ENCODE measurements at regions of chr5 and their contacts with region 1.

Region 1: DNA sequence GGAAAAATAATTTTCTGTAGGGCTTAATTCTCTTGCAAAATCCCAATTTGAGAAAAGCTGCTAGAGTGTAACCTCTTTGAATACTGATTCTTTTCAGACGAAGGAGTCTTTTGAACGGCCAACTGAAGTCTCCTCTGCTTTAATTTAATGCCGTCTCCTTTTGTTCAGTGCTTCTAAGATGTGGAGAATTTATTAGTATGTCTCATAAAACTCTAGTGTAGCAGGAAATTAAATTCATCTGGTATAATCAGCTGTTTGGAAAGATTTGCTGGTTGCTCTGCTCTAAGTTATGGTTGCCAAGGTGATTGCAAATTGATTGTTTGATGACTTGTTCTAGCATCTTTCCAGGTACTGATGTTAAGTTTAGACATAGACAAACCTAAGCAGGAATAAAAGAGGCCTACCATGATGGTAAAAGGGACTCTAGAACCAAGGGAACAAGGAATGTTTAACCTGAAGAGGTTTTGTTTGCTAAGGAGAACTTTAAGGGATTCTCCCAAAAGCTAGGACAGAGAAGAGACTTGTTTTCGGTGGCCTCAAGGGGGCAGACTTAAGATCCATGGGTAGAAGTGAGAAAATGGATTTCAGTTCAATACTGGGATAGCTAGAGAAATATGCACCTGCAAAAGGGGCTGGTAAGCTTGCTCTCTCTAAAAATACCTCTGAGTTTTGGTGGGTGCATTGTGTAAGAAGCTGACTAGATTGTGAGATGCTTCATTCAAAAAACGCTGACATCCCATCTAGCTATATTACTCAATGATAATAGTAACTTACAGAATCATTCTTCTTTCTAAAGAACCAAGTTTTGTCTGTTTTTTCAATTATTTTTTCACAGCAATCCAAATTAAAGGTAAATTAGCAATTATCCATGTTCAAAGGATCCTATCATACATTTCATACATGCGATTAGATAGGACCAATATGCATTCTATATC is 5.7 kb upstream of the ADRB2 start:
- DNase-seq: peak; percentile 31
- ATAC-seq: peak; percentile 83
- H3K4me3 ChIP-seq: no peak overlapping the region
- H3K27ac ChIP-seq: no peak overlapping the region
- H3K4me1 ChIP-seq: peaks cover 5 to 6% of the 10 kb centered on the region in 2 experiments; a peak in 2 of 4 replicates
- H3K27me3 ChIP-seq: no peaks in the 10 kb centered on the region
- CTCF ChIP-seq: peak; percentile 60 to 78 (median 78); a peak in 5 of 6 replicates
- POLR2A ChIP-seq: no peak
- RAD21 ChIP-seq: peak; percentile 49

Region 2: GRCh38 chr5:148780711-148781110 is 40.0 kb before region 1 on chr5:
- CTCF ChIA-PET with region 1: no interaction called
- POLR2A ChIA-PET with region 1: no interaction called
- RAD21 ChIA-PET with region 1: no interaction called
- intact Hi-C with region 1: no loop called
- DNase-seq: no peak
- ATAC-seq: no peak
- H3K4me3 ChIP-seq: no peak overlapping the region
- H3K27ac ChIP-seq: no peak overlapping the region
- H3K4me1 ChIP-seq: peaks cover 5 to 21% of the 10 kb centered on the region in 2 experiments; a peak in 2 of 4 replicates
- H3K27me3 ChIP-seq: no peaks in the 10 kb centered on the region
- CTCF ChIP-seq: 0 out of 6 replicates have a peak, but pooled peaks of 1 of the 3 experiments have one; percentile 15
- POLR2A ChIP-seq: no peak
- RAD21 ChIP-seq: no peak

Region 3: DNA sequence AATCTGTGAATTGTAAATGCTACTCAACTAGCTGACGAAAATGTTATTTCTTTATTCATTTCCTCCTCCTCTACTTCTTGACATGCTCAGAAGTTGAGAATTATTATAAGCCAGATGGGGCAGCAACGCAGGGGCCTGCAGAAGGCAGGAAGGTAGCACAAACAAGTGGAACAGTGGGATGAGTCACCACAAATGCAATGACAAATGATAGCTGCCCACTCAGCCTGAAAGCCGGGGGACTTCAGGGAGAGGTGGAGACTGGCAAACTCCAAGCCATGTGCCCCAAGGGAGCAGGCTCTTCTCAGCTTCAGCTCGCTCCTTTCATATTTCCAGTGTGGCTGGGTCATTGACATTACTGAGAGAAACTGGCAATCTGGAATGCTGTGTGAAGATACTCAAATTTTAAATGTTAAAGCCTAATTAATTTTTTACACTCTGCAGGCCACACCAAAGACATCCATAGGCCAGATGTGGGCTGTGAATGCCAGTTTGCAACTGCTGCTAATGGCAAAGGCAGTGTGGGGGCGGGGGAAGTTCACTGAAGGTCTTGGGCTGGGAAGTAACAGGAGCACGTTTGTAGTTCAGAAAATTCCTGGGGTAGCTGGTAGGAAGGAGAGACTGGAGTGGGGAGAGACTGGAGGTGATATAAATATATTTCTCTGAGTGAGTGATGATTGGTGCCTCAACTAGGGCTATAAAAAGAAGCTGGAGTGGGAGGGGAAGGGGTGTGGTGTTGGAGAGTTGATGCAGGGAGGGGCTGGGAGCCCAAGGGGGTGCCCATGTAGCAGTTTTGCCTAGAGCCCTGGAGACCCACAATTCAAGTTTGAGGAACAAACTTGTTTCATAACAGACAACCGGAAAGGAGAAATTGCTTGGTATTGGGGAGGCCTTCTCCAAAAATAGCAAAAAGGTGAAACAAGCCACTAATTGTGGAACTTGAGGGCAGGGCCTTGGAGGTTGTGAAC is 15.1 kb before region 1 on chr5:
- CTCF ChIA-PET with region 1: interaction called, 18 read pairs
- POLR2A ChIA-PET with region 1: no interaction called
- RAD21 ChIA-PET with region 1: no interaction called
- intact Hi-C with region 1: no loop called
- DNase-seq: no peak
- ATAC-seq: peak; percentile 63
- H3K4me3 ChIP-seq: no peak overlapping the region
- H3K27ac ChIP-seq: no peak overlapping the region
- H3K4me1 ChIP-seq: peaks cover 3 to 13% of the 10 kb centered on the region in 2 experiments; a peak in 3 of 4 replicates
- H3K27me3 ChIP-seq: no peaks in the 10 kb centered on the region
- CTCF ChIP-seq: no peak
- POLR2A ChIP-seq: no peak
- RAD21 ChIP-seq: no peak

Region 4: DNA sequence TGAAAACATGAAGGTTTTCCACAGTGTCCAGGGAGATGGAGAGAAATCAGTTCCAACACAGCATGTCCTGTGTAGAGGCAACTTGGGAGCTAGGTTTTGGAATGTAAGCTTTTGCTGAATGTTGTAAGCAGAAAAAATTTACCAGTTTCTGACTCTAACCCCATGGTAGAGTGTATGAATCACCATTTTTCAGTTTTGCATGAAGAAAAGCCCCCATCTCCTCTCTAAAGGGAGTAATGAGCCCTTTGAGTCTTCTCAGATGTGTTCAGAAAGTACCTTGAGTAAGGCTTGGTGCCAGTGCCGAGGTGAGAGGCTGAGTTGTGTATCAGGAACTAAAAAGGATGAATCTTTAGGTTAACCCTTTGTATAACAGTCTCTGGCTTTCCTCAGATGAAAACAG is 101.9 kb after region 1 on chr5:
- CTCF ChIA-PET with region 1: no interaction called
- POLR2A ChIA-PET with region 1: no interaction called
- RAD21 ChIA-PET with region 1: no interaction called
- intact Hi-C with region 1: no loop called
- DNase-seq: no peak
- ATAC-seq: no peak
- H3K4me3 ChIP-seq: no peak overlapping the region
- H3K27ac ChIP-seq: no peak overlapping the region
- H3K4me1 ChIP-seq: peaks cover 2 to 6% of the 10 kb centered on the region in 2 experiments; a peak in 2 of 4 replicates
- H3K27me3 ChIP-seq: peaks cover 6% of the 10 kb centered on the region; the same call in 1 of the 2 replicates
- CTCF ChIP-seq: no peak
- POLR2A ChIP-seq: no peak
- RAD21 ChIP-seq: no peak

Region 5: GRCh38 chr5:148957591-148958202 is 137.0 kb after region 1 on chr5:
- CTCF ChIA-PET with region 1: interaction called, 19 read pairs
- POLR2A ChIA-PET with region 1: no interaction called
- RAD21 ChIA-PET with region 1: interaction called in 1 of 2 experiments, 4 read pairs
- intact Hi-C with region 1: loop called (anchors 2 kb)
- DNase-seq: no peak
- ATAC-seq: peak; percentile 76
- H3K4me3 ChIP-seq: no peak overlapping the region
- H3K27ac ChIP-seq: no peak overlapping the region
- H3K4me1 ChIP-seq: peaks cover 0 to 7% of the 10 kb centered on the region in 2 experiments; a peak in 1 of 4 replicates
- H3K27me3 ChIP-seq: no peaks in the 10 kb centered on the region
- CTCF ChIP-seq: peak; percentile 84 to 97 (median 90)
- POLR2A ChIP-seq: no peak
- RAD21 ChIP-seq: peak; percentile 83

Region 6: DNA sequence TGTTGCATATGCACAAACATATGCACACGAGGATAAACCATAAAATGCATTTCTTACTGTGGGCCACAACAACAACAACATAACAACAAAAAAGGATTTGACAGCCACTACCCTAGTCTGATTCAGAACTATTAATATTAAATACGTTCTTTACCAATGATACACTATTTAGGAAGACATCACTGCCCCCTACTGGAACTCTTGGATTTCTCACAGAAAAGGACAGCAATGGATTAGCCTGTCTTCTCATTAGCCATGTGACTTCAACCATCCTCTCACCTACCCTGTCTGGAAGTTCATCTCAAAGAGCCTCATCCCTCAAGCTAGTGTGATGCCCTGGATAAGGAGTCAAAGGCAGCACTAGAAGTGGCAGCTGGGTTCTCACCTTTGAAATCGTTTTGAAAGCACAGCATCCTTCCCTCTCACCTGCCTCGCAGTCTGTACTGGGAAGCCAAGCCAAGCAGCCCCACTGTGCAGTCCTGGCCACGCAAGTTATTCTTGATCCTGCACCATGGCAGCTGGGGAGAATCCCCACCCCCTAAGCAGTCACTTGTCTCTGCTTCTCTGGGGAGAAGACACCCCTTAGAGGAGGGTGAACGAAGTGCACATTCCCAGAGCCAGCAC is 177.6 kb after region 1 on chr5:
- CTCF ChIA-PET with region 1: interaction called, 8 read pairs
- POLR2A ChIA-PET with region 1: no interaction called
- RAD21 ChIA-PET with region 1: no interaction called
- intact Hi-C with region 1: loop called (anchors 5 kb)
- DNase-seq: peak; percentile 63
- ATAC-seq: peak; percentile 82
- H3K4me3 ChIP-seq: no peak overlapping the region
- H3K27ac ChIP-seq: no peak overlapping the region
- H3K4me1 ChIP-seq: peaks cover 8 to 20% of the 10 kb centered on the region in 2 experiments
- H3K27me3 ChIP-seq: no peaks in the 10 kb centered on the region
- CTCF ChIP-seq: peak; percentile 63 to 81 (median 80)
- POLR2A ChIP-seq: no peak
- RAD21 ChIP-seq: peak; percentile 91

Region 7: DNA sequence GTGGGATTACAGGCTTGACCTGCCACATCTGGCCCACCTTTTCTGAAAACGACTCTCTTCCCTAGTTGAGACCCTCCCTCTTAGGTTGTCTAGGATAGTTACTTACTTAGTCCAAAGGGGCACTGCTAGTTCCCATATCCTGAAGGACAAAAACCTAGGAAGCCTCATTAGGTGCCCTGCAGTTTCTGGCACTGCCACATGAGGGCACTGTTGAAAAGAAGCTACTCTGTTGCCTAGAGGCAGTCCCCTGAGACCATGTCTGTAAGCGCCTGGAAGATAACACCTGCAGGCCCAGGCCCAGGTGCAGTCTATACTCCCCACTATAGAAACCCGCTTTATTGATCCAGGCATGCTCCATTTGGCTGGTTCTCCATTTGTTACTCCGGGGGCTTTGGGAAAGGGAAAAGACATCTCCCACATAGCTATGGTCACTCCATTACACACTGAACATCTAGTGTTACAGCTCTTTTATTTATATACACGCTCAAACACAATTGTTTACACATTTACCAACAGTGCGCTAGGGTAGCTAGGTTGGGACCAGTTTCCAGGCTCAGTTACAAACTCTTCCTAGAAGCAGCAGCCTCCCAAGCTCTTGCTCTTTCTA is 836.0 kb after region 1 on chr5:
- CTCF ChIA-PET with region 1: no interaction called
- POLR2A ChIA-PET with region 1: no interaction called
- RAD21 ChIA-PET with region 1: no interaction called
- intact Hi-C with region 1: no loop called
- DNase-seq: no peak
- ATAC-seq: peak; percentile 73
- H3K4me3 ChIP-seq: no peak overlapping the region
- H3K27ac ChIP-seq: no peak overlapping the region
- H3K4me1 ChIP-seq: no peaks in the 10 kb centered on the region
- H3K27me3 ChIP-seq: no peaks in the 10 kb centered on the region
- CTCF ChIP-seq: peak; percentile 60 to 93 (median 87)
- POLR2A ChIP-seq: no peak
- RAD21 ChIP-seq: peak; percentile 61

Measured in HCT116 (cell line).